H1 (cell line): ENCODE measurements at regions of chr12 and their contacts with region 1.

Region 1: DNA sequence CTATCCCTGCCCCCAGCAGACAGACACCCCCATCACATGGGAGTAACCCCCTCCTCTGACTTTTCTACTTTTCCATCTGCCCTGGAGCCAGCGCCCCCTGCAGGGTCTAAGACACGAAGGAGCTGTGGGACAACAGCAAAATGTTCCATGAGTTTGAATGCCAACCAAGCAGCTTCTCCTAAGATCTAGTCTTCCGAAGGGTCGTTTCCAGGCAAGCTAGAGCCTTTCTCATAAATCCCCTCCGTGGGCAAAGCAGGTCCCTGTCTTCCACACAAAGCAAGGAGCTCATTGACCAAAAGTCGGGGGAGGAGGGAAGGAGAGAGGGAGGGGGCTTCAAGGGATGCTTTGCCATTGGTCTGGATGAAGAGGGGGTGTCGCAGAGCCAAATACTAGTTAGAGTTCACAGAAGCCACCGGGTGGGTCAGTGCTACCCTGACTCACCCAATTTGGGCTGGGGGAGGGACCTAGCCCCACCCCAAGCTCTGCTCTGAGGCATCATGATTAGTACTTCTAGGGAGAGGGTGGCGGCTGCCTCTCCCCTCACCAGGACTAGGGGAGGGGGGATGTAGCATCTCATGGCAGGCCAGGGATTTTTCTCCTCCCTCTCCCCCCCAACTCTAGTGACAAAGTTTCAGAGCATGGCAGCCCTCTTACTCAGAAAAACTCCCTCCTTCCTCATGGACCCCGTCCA is 1.6 kb downstream of the MSI1 start:
- DNase-seq: peak in 1 of 2 experiments; percentile 79
- H3K4me3 ChIP-seq: peak overlapping the region; percentile 48 to 84 (median 65)
- H3K27ac ChIP-seq: no peak overlapping the region
- H3K4me1 ChIP-seq: peaks cover 20 to 35% (median 26%) of the 10 kb centered on the region in 4 experiments
- H3K27me3 ChIP-seq: peaks cover 0 to 8% (median 6%) of the 10 kb centered on the region in 4 experiments; a peak in 4 of 7 replicates
- CTCF ChIP-seq: peak; percentile 60 to 76 (median 66)
- EP300 ChIP-seq: no peak
- POLR2A ChIP-seq: no peak
- RAD21 ChIP-seq: peak; percentile 33 to 54; a peak in 2 of 4 replicates

Region 2: DNA sequence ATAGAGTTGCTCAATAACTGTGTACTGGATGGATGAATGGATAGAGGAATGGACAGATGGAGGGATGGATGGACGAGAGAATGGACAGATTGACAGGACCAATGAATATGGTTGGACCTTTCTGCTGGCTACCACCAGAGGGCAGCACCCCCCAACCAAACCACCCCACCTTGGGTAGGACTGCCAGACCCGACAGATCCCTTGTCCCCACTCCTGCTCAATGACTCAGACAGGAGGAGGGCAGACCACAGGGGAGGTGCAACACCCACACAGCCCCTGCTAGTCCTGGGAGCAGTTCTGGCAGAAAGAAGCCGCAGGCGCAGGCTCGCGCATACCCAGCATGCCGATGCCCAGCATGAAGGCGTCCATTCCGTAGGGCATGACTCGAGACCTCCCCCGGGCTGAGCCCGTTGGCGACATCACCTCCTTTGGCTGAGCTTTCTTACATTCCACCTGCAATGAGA is 10.8 kb before region 1 on chr12:
- CTCF ChIA-PET with region 1: interaction called, 59 read pairs
- POLR2A ChIA-PET with region 1: interaction called, 78 read pairs
- DNase-seq: peak; percentile 80 to 90
- H3K4me3 ChIP-seq: no peak overlapping the region
- H3K27ac ChIP-seq: no peak overlapping the region
- H3K4me1 ChIP-seq: peaks cover 8 to 16% (median 13%) of the 10 kb centered on the region in 4 experiments
- H3K27me3 ChIP-seq: no peaks in the 10 kb centered on the region
- CTCF ChIP-seq: peak; percentile 91 to 94 (median 93)
- EP300 ChIP-seq: no peak
- POLR2A ChIP-seq: no peak
- RAD21 ChIP-seq: peak; percentile 93 to 96

Region 3: GRCh38 chr12:120388691-120389481 is 21.5 kb after region 1 on chr12:
- CTCF ChIA-PET with region 1: interaction called, 26 read pairs
- POLR2A ChIA-PET with region 1: interaction called, 16 read pairs
- DNase-seq: peak; percentile 71 to 88
- H3K4me3 ChIP-seq: peak overlapping the region; percentile 7 to 42 (median 19); a peak in 5 of 8 replicates
- H3K27ac ChIP-seq: peak overlapping the region; percentile 53; the same call in 1 of the 2 replicates
- H3K4me1 ChIP-seq: peaks cover under 1 to 21% (median 9%) of the 10 kb centered on the region in 4 experiments
- H3K27me3 ChIP-seq: no peaks in the 10 kb centered on the region
- CTCF ChIP-seq: no peak
- EP300 ChIP-seq: peak in 1 of 2 experiments; percentile 43; a peak in 1 of 3 replicates
- POLR2A ChIP-seq: peak in 1 of 2 experiments; percentile 50; a peak in 2 of 3 replicates
- RAD21 ChIP-seq: no peak

Region 4: DNA sequence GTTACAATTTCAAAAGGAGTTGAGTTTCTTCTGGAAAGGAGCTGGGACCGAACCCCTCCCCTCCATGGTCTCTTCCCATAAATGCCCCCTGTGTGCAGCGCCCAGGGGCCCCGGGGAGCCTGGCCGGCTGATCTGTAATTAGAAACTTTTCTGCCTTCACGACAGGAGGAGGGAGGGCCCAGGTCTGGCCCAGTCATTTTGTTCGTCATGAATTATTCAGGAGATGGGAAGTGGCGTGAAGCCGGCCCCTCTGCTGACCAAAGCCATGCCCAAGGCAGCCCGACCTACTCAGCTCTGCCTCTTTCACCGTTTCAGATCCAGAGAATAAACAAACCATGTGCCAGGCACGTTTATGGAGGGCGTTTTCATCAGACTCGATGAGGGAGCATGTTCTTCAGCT is 34.8 kb after region 1 on chr12:
- CTCF ChIA-PET with region 1: interaction called, 22 read pairs
- POLR2A ChIA-PET with region 1: interaction called, 18 read pairs
- DNase-seq: peak in 1 of 2 experiments; percentile 59
- H3K4me3 ChIP-seq: peak overlapping the region in 1 of 4 experiments; percentile 27; a peak in 1 of 8 replicates
- H3K27ac ChIP-seq: no peak overlapping the region
- H3K4me1 ChIP-seq: peaks cover 1 to 13% (median 6%) of the 10 kb centered on the region in 4 experiments
- H3K27me3 ChIP-seq: no peaks in the 10 kb centered on the region
- CTCF ChIP-seq: no peak
- EP300 ChIP-seq: no peak
- POLR2A ChIP-seq: no peak
- RAD21 ChIP-seq: no peak

Region 5: DNA sequence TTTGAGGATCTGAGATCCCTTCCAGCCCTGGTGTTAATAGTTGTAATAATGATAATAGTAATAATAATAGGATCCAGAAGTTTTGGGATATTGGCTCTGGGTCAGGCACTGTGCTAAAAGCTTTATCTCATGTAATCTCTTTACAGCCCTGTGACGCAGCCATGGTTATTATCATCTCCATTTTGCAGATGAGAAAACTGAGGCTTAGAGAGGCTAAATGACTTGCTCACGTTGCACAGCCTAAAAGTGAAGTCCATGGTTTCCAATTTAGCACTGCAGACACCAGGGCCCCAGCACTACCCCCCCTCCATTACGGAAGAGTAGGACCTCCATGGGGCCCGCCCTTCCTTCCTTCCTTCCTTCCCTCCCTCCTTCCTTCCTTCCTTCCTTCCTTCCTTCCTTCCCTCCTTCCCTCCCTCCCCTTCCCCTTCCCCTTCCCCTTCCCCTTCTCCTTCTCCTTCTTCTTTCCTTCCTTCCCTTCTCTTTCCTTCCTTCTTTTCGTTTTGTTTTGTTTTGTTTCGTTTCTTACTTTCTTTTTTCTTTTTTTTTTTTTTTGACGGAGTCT is 55.6 kb after region 1 on chr12:
- CTCF ChIA-PET with region 1: interaction called, 310 read pairs
- POLR2A ChIA-PET with region 1: interaction called, 7 read pairs
- DNase-seq: no peak
- H3K4me3 ChIP-seq: no peak overlapping the region
- H3K27ac ChIP-seq: no peak overlapping the region
- H3K4me1 ChIP-seq: peaks cover 0 to 4% (median 0%) of the 10 kb centered on the region in 4 experiments; a peak in 1 of 7 replicates
- H3K27me3 ChIP-seq: no peaks in the 10 kb centered on the region
- CTCF ChIP-seq: no peak
- EP300 ChIP-seq: no peak
- POLR2A ChIP-seq: no peak
- RAD21 ChIP-seq: no peak

Region 6: DNA sequence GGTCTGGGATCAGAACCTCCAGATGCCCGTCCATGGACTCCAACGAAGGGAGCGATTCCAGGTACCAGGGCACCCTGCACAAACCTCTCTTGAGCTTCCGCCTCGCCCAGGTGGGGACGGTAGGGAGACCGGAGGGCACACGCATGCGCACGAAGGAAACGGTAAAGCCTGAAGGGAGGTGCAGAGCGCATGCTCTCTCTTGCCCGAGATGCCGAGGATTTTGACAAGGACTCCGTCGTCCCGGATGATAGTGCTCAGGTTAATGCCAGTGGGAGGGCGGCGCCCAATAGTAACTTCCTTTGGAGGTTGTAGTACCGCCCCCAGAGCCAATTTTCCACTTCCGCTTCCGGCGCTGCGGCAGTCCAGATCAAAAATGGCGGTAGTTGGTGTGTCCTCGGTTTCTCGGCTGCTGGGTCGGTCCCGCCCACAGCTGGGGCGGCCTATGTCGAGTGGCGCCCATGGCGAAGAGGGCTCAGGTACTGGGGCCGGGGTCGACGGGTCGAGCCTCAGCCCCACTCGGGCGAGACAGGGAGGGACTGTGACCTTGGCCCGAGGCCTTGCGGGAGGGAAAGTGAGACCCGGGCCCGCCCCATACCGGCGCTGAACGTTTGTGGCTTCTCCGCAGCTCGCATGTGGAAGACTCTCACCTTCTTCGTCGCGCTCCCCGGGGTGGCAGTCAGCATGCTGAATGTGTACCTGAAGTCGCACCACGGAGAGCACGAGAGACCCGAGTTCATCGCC is 70.5 kb after region 1 on chr12 and contains the start of gene COX6A1:
- CTCF ChIA-PET with region 1: interaction called, 310 read pairs
- POLR2A ChIA-PET with region 1: interaction called, 12 read pairs
- DNase-seq: peak; percentile 94 to 98
- H3K4me3 ChIP-seq: peak within 1 kb of the TSS; percentile 81 to 92 (median 90)
- H3K27ac ChIP-seq: peak within 1 kb of the TSS; percentile 58; the same call in 1 of the 2 replicates
- H3K4me1 ChIP-seq: peaks cover 0 to 2% (median under 1%) of the 10 kb centered on the region in 4 experiments; a peak in 1 of 7 replicates
- H3K27me3 ChIP-seq: no peaks in the 10 kb centered on the region
- CTCF ChIP-seq: peak; percentile 25 to 31 (median 28); a peak in 3 of 4 replicates
- EP300 ChIP-seq: no peak
- POLR2A ChIP-seq: peak; percentile 35 to 82
- RAD21 ChIP-seq: peak in 1 of 2 experiments; percentile 9; a peak in 2 of 4 replicates
- total RNA-seq, gene COX6A1: 437 and 465 TPM in 2 replicates